ENCODE measurements at regions of chr12 and their contacts with region 1.

Region 1: GRCh38 chr12:92145731-92146496 is at the start of gene BTG1:
- DNase-seq: peak; percentile 98
- ATAC-seq: peak; percentile 90
- total RNA-seq, gene BTG1: 74.6 TPM

Region 2: DNA sequence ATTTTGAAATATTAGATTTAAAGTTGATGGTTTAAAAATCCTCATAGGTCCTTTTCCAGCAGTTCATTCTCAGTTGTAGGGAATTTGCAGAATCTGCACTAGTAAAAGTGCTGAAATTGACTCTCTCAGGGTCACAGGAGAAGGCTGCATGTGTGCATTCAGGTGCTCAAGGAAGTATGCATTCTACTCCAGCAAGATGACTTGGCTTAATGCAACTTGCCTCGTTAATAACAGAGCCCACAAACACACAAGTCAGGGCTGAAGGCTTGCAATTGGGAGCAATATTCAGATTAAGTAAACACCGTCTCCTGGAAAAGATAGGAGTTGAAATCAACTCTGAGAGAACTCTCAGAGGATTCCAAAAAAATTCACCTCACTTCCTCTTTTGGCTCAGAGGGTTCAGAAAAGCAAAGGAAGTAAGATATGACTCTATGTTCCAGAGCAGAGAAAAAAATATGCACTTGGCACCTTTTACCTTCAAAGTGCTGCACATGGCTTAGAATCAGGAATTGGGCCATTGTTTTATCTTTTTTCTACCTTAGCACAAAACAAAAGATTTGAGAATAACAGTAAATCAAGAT is 557.0 kb before region 1 on chr12:
- intact Hi-C with region 1: loop called (anchors 10 kb)
- DNase-seq: no peak
- ATAC-seq: peak; percentile 29

Region 3: GRCh38 chr12:91811481-91812287 is 334.2 kb before region 1 on chr12:
- intact Hi-C with region 1: loop called (anchors 5 kb)
- DNase-seq: peak; percentile 81
- ATAC-seq: peak; percentile 70

Region 4: DNA sequence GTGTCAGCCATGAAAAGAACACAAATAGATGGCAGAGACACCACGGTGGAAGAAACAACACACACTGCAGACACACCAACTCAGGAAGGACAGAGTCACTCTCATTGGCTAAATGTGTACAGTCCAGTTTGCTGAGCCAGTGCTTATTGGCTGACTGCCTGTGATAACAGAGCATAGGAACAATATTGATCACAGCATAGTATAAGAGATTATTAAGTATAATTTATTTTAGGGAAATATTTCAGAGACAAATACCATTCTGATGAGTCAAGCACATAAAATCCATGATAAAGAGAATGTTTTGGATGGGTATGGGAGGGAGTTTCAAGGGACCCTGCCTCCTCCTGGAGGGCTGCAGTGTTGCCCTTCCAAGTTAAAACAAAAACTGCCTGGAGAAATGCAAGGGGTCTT is 51.2 kb before region 1 on chr12:
- intact Hi-C with region 1: no loop called
- DNase-seq: no peak
- ATAC-seq: no peak

Region 5: DNA sequence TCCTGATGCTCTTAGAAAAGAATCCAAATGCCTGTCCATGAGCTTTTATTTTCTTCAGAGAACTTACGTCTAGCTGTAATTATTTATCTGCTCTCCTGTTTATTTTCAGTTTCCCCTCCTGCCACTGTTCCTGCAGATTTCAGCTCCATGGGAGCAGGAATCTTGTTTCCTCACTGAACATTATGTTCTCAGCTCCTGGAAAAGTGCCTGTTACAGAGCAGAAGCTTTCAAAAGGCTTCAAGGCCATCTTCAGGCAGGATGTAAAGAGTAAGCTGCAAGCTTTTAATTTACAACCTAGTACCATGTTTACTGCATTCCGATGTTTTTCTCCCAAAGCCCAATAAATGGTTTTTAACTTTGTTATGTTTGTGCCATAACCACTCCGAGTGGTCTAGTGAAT is 98.1 kb after region 1 on chr12:
- intact Hi-C with region 1: loop called (anchors 10 kb)
- DNase-seq: no peak
- ATAC-seq: peak; percentile 97

Region 6: GRCh38 chr12:92570056-92570753 is 424.3 kb after region 1 on chr12:
- intact Hi-C with region 1: loop called (anchors 5 kb)
- DNase-seq: no peak
- ATAC-seq: peak; percentile 87

Measured in left ventricle myocardium superior (tissue), 1 donor.